ENCODE measurements at regions of chr5 and their contacts with region 1.

Region 1: GRCh38 chr5:149551200-149552037 is at the start of gene CSNK1A1:
- DNase-seq: peak; percentile 98 to 99
- ATAC-seq: peak; percentile 96
- H3K4me3 ChIP-seq: peak within 1 kb of the TSS; percentile 85
- H3K27ac ChIP-seq: peak within 1 kb of the TSS; percentile 97
- H3K4me1 ChIP-seq: peaks cover 30% of the 10 kb centered on the region
- CTCF ChIP-seq: peak; percentile 78
- EP300 ChIP-seq: no peak
- POLR2A ChIP-seq: peak; percentile 58
- RAD21 ChIP-seq: peak; percentile 71 to 73
- polyA plus RNA-seq, gene CSNK1A1: 180 and 218 TPM in 2 replicates

Region 2: GRCh38 chr5:149345147-149345875 is 206.1 kb before region 1 on chr5 and contains the start of gene GRPEL2:
- CTCF ChIA-PET with region 1: interaction called, 10 read pairs
- POLR2A ChIA-PET with region 1: interaction called, 4 read pairs
- DNase-seq: peak; percentile 98 to 99
- ATAC-seq: peak; percentile 99 to 100
- H3K4me3 ChIP-seq: peak within 1 kb of the TSS; percentile 94
- H3K27ac ChIP-seq: peak within 1 kb of the TSS; percentile 89 to 93
- H3K4me1 ChIP-seq: peaks cover 23% of the 10 kb centered on the region
- CTCF ChIP-seq: peak; percentile 8; the same call in 1 of the 3 replicates
- EP300 ChIP-seq: no peak
- POLR2A ChIP-seq: peak; percentile 82
- RAD21 ChIP-seq: no peak
- polyA plus RNA-seq, gene GRPEL2: 17.0 and 26.4 TPM in 2 replicates

Region 3: DNA sequence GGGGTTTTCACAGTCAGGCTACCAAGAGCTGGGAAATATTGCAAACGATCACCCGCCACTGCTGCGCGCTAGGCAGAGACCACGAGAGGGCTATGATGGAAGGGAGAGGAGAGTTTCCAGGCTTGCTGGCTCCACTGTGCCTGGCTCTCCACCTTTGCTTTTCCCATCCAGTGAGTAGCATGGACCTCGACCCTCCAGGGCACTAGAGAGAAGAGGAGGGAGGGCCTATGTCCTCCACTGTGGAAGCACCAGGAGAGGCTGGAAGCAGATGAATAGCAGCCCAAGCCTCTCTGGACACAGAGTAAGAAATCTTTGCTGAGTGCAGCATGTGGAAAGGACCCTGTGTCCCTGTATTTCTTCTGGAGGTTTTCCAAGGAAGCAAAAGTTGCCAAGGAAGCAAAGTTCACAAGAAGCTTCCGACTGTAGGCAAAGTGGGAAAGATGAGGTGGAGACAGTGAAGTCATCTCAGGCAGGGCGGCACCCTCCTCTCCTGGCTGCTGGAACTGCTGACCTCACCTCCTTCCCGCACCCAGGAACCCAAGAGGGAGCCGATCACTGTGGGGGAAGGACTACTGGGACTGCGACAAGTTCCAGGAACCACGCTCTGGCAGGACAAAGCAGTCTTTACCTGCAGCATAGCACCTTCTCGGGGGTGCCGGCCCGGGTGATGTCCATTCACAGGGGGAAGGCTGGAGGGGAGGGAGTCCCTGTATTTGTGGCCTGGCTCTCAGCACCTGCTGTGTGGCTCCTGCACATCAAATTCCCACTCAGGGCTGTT is 79.8 kb before region 1 on chr5:
- CTCF ChIA-PET with region 1: interaction called, 12 read pairs
- POLR2A ChIA-PET with region 1: no interaction called
- DNase-seq: peak; percentile 58 to 84
- ATAC-seq: peak; percentile 90 to 93
- H3K4me3 ChIP-seq: no peak overlapping the region
- H3K27ac ChIP-seq: peak overlapping the region; percentile 79 to 80
- H3K4me1 ChIP-seq: peaks cover 28% of the 10 kb centered on the region
- CTCF ChIP-seq: no peak
- EP300 ChIP-seq: no peak
- POLR2A ChIP-seq: no peak
- RAD21 ChIP-seq: no peak

Region 4: GRCh38 chr5:149485655-149486425 is 65.6 kb before region 1 on chr5:
- CTCF ChIA-PET with region 1: no interaction called
- POLR2A ChIA-PET with region 1: interaction called, 11 read pairs
- DNase-seq: peak; percentile 63 to 94
- ATAC-seq: peak; percentile 87 to 93
- H3K4me3 ChIP-seq: no peak overlapping the region
- H3K27ac ChIP-seq: peak overlapping the region; percentile 72 to 85
- H3K4me1 ChIP-seq: peaks cover 74% of the 10 kb centered on the region
- CTCF ChIP-seq: no peak
- EP300 ChIP-seq: no peak
- POLR2A ChIP-seq: no peak
- RAD21 ChIP-seq: no peak

Region 5: DNA sequence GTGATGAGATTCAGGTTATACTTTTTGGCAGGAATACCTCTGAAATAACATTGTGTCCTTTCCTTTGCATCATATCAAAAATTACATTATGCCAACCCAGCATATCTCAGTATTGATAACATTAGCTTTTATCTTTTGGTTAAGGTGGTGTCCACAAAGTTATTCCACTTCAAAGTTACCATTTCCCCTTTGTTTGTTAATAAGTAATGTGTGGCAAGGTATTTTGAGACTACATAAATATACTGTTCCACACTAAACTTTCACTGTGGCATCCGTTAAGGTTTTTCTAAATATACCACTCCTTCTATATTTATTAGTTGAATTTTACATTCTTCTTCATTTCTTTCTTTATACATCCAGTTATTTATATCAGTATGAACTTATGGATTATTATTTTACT is 15.8 kb after region 1 on chr5:
- CTCF ChIA-PET with region 1: interaction called, 49 read pairs
- POLR2A ChIA-PET with region 1: interaction called, 65 read pairs
- DNase-seq: no peak
- ATAC-seq: no peak
- H3K4me3 ChIP-seq: no peak overlapping the region
- H3K27ac ChIP-seq: no peak overlapping the region
- H3K4me1 ChIP-seq: peaks cover 19% of the 10 kb centered on the region
- CTCF ChIP-seq: no peak
- EP300 ChIP-seq: no peak
- POLR2A ChIP-seq: no peak
- RAD21 ChIP-seq: no peak

Region 6: DNA sequence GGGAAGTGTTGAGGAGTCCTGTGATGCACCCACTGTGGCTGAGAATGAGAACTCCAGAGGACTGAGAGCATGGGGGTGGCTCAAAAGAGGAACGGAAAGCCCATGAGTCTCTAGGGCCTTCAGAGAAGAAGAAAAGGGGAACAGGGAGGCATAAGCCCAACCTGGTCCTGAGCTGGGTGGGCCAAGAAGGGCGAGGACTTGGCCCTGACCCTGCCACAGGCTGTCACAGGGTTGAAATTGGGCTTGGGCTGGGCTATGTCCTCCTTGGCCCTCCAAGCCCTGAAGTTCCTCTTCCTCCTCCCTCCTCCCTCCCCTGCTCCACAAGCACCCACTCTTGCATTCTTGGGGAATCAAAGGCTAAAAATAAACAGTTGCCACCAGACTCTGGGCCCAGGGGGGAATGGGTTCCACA is 129.4 kb after region 1 on chr5:
- CTCF ChIA-PET with region 1: no interaction called
- POLR2A ChIA-PET with region 1: no interaction called
- DNase-seq: no peak
- ATAC-seq: no peak
- H3K4me3 ChIP-seq: no peak overlapping the region
- H3K27ac ChIP-seq: no peak overlapping the region
- H3K4me1 ChIP-seq: no peaks in the 10 kb centered on the region
- CTCF ChIP-seq: no peak
- EP300 ChIP-seq: no peak
- POLR2A ChIP-seq: no peak
- RAD21 ChIP-seq: no peak

Region 7: GRCh38 chr5:149841851-149842793 is 290.7 kb after region 1 on chr5:
- CTCF ChIA-PET with region 1: no interaction called
- POLR2A ChIA-PET with region 1: no interaction called
- DNase-seq: no peak
- ATAC-seq: no peak
- H3K4me3 ChIP-seq: no peak overlapping the region
- H3K27ac ChIP-seq: no peak overlapping the region
- H3K4me1 ChIP-seq: peaks cover 20% of the 10 kb centered on the region
- CTCF ChIP-seq: no peak
- EP300 ChIP-seq: no peak
- POLR2A ChIP-seq: no peak
- RAD21 ChIP-seq: no peak

Region 8: DNA sequence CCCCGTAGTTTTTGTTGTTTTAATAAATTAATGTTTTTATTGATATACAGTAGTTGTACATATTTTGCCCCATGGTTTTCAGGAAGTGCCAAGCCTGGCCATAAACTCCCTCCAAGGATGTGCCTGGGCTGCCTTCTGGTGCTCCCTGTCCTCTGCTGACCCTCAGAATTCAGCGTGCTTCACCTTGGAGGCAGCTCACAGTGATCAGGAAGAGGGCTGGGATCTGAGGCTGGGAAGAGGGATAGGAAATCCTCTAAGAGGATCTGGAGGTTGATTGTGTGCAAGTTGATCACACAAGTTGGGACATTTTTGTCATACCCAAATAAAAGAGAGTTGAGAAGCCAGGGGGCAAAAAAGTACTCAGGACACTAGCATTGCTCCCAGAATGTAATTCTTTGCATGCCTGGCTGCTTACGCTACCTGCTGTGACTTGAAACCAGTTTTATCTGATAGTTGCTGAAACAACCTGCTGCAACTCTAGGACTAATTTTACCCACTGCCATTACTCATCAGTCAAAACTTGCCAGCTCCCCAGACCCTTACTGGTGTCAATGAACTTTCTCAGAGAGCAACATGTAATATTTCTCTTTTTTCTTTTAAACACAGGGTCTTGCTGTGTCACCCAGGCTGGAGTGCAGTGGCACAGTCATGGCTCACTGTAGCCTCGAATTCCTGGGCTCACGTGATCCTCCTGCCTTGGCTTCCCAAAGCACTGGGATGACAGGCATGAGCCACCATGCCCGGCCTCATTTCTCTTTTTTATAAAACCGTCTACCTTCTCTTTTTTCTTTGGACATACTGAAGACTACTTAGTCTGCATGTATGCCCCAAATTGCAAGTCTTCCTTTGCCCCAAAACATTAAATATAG is 364.2 kb after region 1 on chr5:
- CTCF ChIA-PET with region 1: no interaction called
- POLR2A ChIA-PET with region 1: no interaction called
- DNase-seq: no peak
- ATAC-seq: no peak
- H3K4me3 ChIP-seq: no peak overlapping the region
- H3K27ac ChIP-seq: no peak overlapping the region
- H3K4me1 ChIP-seq: no peaks in the 10 kb centered on the region
- CTCF ChIP-seq: no peak
- EP300 ChIP-seq: no peak
- POLR2A ChIP-seq: no peak
- RAD21 ChIP-seq: no peak